ENCODE measurements at regions of chr9 and their contacts with region 1.

Region 1: DNA sequence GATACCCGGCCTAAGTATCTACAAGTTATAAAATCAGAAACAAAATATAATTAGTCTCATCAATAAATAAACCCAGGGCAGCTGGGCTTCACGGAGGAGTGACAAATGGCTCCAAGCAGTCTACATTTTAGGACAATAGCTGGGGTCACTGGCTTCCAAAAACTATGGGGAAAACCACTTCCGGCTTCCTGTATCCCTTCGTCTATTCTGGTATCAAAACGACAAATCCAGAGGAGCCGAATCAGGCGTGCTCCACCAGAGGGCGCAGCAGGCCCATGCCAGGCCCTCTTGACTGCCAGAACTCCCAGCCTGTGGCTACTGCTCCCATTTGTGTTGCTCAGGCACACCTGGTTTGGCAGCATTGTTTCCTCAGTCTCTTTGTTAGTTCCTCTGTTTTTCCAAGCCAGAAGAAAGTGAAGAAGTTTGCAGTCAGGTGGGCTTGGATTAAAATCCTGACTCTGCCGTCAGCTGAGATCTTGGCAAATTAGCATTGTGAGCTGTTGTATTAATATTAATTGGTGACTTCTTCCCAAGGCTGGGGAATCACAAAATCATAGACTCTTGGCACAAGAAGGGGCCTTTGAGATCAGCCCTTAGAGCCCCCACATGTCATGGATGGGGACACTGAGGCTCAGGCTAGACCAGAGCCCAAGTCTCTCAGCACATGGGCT is 11.6 kb upstream of the RAB14 start:
- DNase-seq: peak; percentile 87 to 93 (median 88)
- ATAC-seq: peak; percentile 89 to 97 (median 94)
- H3K4me3 ChIP-seq: peak overlapping the region in 2 of 12 donors; percentile 18
- H3K27ac ChIP-seq: peak overlapping the region in 10 of 12 donors; percentile 15 to 83 (median 49)
- H3K4me1 ChIP-seq: peaks cover 0 to 18% (median 5%) of the 10 kb centered on the region in 12 donors
- H3K27me3 ChIP-seq: no peaks in the 10 kb centered on the region
- CTCF ChIP-seq: peak; percentile 90 to 99 (median 97)
- POLR2A ChIP-seq: no peak

Region 2: GRCh38 chr9:121267689-121268597 is 54.7 kb after region 1 on chr9 and contains the start of gene GSN:
- intact Hi-C with region 1: loop called in 4 of 10 experiments (anchors 5 to 10 kb)
- DNase-seq: peak; percentile 88 to 94 (median 90)
- ATAC-seq: peak; percentile 65 to 92 (median 84)
- H3K4me3 ChIP-seq: peak within 1 kb of the TSS; percentile 75 to 95 (median 88)
- H3K27ac ChIP-seq: peak within 1 kb of the TSS; percentile 30 to 96 (median 88)
- H3K4me1 ChIP-seq: peaks cover 6 to 65% (median 54%) of the 10 kb centered on the region in 12 donors
- H3K27me3 ChIP-seq: no peaks in the 10 kb centered on the region
- CTCF ChIP-seq: peak in 4 of 12 donors; percentile 5 to 32 (median 8)
- POLR2A ChIP-seq: peak in 1 of 2 donors; percentile 81
- total RNA-seq, gene GSN: 422 to 2,088 (median 703) TPM

Region 3: GRCh38 chr9:121299467-121300234 is 86.4 kb after region 1 on chr9:
- intact Hi-C with region 1: no loop called
- DNase-seq: peak; percentile 88 to 93 (median 92)
- ATAC-seq: peak; percentile 35 to 78 (median 72)
- H3K4me3 ChIP-seq: peak overlapping the region; percentile 45 to 93 (median 68)
- H3K27ac ChIP-seq: peak overlapping the region; percentile 86 to 98 (median 94)
- H3K4me1 ChIP-seq: peaks cover 17 to 94% (median 84%) of the 10 kb centered on the region in 12 donors
- H3K27me3 ChIP-seq: no peaks in the 10 kb centered on the region
- CTCF ChIP-seq: peak in 3 of 12 donors; percentile 5 to 18 (median 15)
- POLR2A ChIP-seq: peak in 1 of 2 donors; percentile 93

Region 4: GRCh38 chr9:121321016-121321503 is 107.8 kb after region 1 on chr9:
- intact Hi-C with region 1: loop called (anchors 2 to 10 kb)
- DNase-seq: peak in 1 of 5 donors; percentile 26
- ATAC-seq: no peak
- H3K4me3 ChIP-seq: no peak overlapping the region
- H3K27ac ChIP-seq: peak overlapping the region in 11 of 12 donors; percentile 26 to 98 (median 85)
- H3K4me1 ChIP-seq: peaks cover 10 to 88% (median 67%) of the 10 kb centered on the region in 12 donors
- H3K27me3 ChIP-seq: no peaks in the 10 kb centered on the region
- CTCF ChIP-seq: no peak
- POLR2A ChIP-seq: no peak

Region 5: GRCh38 chr9:121369595-121370265 is 156.5 kb after region 1 on chr9 and contains the start of gene STOM:
- intact Hi-C with region 1: loop called in 1 of 10 experiments (anchors 2 kb)
- DNase-seq: peak; percentile 89 to 95 (median 93)
- ATAC-seq: peak; percentile 63 to 86 (median 74)
- H3K4me3 ChIP-seq: peak within 1 kb of the TSS; percentile 19 to 88 (median 78)
- H3K27ac ChIP-seq: peak within 1 kb of the TSS; percentile 91 to 99 (median 96)
- H3K4me1 ChIP-seq: peaks cover 12 to 78% (median 69%) of the 10 kb centered on the region in 12 donors
- H3K27me3 ChIP-seq: no peaks in the 10 kb centered on the region
- CTCF ChIP-seq: no peak
- POLR2A ChIP-seq: peak; percentile 94 to 100
- total RNA-seq, gene STOM: 125 to 239 (median 154) TPM

Region 6: GRCh38 chr9:121399883-121400607 is 186.8 kb after region 1 on chr9:
- intact Hi-C with region 1: loop called (anchors 1 to 5 kb)
- DNase-seq: no peak
- ATAC-seq: peak; percentile 45 to 62 (median 58)
- H3K4me3 ChIP-seq: no peak overlapping the region
- H3K27ac ChIP-seq: no peak overlapping the region
- H3K4me1 ChIP-seq: peaks cover 0 to 4% (median 0%) of the 10 kb centered on the region in 12 donors
- H3K27me3 ChIP-seq: no peaks in the 10 kb centered on the region
- CTCF ChIP-seq: peak; percentile 64 to 80 (median 70)
- POLR2A ChIP-seq: no peak